Activated CD4-positive, alpha-beta memory T cell treated with anti-CD3 and anti-CD28 coated beads for 36 hours (primary cell): ENCODE measurements at regions of chr3 and their contacts with region 1.

Region 1: GRCh38 chr3:10758304-10759061 is 57.5 kb upstream of the SLC6A11 start:
- DNase-seq: peak; percentile 63
- H3K4me3 Mint-ChIP-seq: no peak overlapping the region
- H3K27ac Mint-ChIP-seq: no peak overlapping the region
- H3K4me1 Mint-ChIP-seq: peaks cover 6% of the 10 kb centered on the region
- H3K27me3 Mint-ChIP-seq: peaks cover 33% of the 10 kb centered on the region

Region 2: DNA sequence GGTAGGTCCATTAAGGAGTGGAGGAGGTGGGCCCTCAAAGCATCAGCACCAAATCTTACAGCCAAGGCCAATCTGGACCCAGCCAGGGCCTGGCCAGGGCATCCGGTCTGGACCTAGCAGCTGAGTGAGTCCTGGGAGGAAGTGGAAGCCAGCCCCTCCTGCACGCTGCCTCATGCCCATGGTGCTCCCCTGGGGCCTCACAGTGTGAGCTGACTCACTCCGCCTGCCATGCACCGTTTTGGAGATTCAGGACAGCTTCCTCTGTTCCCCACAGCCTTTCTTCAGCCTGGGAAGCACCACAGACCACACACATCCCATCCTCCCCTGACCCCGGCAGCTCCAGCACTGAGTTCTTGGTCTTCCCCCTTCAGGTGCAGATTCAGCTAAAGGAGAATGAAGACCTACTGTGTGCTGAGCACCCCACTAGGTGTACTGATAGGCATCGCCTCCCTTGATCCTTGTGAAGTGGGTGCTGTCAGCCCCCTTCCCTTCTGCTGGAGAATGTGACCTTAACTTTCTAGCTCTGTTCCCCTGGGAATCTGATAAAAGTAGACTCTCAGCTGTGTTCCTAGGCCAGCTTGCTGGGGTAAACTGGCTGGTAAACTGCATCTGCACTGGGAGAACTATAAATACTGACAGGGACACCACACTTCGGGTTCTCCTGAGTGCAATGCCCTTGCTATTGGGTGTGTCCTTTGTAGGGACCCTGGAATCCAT is 400.7 kb before region 1 on chr3:
- CTCF ChIA-PET with region 1: no interaction called
- POLR2A ChIA-PET with region 1: no interaction called
- intact Hi-C with region 1: no loop called
- DNase-seq: peak; percentile 29
- H3K4me3 Mint-ChIP-seq: no peak overlapping the region
- H3K27ac Mint-ChIP-seq: no peak overlapping the region
- H3K4me1 Mint-ChIP-seq: peaks cover 7% of the 10 kb centered on the region
- H3K27me3 Mint-ChIP-seq: peaks cover 23% of the 10 kb centered on the region

Region 3: DNA sequence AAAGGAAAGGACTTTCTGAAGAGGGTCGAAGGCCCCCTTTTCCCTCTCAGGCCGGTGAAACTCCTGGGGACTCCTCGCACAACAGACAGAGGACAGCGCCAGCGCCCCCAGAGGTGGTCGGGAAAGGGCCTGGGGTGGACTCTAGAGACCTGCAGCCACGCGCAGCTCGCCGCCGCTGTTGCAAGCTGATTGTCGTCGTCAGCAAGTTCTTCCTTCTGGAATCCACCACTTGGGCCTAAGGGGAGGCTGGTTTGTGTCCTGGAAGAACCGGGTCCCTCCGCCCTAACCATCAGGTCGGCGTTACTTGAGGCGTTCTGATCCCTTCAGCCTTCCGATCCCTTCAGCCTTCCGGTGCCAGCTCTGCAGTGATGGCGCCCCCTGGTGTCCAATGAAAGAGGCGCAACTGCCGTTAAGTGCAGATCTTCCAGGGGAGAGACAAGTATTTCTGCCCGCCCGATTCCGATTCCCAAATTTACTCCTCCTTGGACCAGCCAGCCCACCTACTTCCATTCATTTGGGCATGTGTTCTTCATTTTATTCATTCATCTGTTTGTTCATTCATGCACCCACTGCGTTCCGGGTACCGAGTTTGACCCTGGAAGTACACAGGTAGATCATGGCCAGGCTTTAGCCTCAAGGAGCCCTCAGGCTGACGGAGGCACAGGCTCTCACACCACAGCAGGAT is 19.7 kb before region 1 on chr3:
- CTCF ChIA-PET with region 1: interaction called, 27 read pairs
- POLR2A ChIA-PET with region 1: no interaction called
- intact Hi-C with region 1: no loop called
- DNase-seq: peak; percentile 80
- H3K4me3 Mint-ChIP-seq: no peak overlapping the region
- H3K27ac Mint-ChIP-seq: no peak overlapping the region
- H3K4me1 Mint-ChIP-seq: peaks cover 2% of the 10 kb centered on the region
- H3K27me3 Mint-ChIP-seq: peaks cover 35% of the 10 kb centered on the region

Region 4: DNA sequence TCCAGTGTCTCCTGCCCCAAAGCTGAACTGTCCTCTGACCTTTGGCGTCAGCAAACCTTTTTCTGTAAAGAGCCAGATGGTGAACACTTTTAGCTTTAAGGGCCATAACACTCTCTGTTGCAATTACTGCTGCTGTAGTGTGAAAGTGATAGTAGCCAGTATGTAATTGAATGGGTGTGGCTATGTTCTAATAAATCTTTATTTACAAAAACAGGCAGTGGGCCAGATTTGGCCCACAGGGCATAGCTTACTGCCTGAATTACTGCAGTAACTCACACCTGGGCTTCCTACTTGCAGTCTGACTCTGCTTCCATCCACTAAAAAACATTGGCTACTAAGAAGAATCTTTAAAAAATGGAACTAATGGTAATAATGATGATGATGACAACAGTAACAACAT is 10.4 kb before region 1 on chr3:
- CTCF ChIA-PET with region 1: interaction called, 11 read pairs
- POLR2A ChIA-PET with region 1: no interaction called
- intact Hi-C with region 1: no loop called
- DNase-seq: no peak
- H3K4me3 Mint-ChIP-seq: no peak overlapping the region
- H3K27ac Mint-ChIP-seq: no peak overlapping the region
- H3K4me1 Mint-ChIP-seq: no peaks in the 10 kb centered on the region
- H3K27me3 Mint-ChIP-seq: peaks cover 6% of the 10 kb centered on the region

Region 5: DNA sequence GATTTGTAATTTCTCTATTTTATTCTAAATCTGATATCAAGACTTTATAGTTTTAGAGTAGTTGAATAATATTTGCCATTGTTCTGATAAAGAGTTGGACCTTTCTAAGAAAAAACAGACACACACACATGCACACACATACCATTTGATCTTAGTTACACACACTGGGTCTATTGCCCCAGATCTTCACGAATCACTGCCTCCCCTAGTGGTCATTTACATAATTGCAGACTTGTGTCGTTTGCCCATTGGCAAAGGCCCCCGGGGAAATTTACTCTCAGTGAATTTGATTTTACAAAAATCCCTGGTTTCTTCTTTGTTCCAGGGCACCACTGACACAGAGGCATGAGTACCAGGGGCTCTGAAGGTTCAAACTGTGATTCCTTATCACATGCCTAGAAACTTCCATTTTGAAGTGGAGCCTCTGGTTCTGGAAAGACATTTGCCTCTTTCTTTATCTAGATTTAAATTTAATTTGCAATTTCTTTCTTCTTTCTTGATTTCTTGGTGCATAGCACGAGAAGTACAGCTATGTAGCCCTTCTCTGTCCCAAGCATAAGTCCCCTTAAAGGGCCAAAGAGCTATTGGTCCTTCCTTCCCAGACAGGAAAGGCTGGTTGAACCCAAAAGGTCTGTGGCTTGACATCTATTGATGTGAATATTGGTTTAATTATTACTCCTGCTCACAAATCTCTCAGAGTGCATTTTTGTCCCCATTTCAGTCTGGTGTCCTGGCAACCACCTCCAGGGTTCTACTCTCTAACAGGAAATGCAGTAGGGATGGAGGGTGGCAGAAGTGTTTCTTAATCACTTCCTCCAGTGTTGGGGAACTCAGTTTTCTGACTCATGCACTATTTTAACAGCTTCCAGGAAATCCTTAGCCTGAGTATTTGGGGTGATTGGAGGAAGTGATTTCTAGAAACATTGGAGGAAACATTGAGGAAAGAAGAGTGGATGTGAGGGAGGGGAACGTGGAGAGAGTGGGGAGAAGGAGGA is 25.2 kb after region 1 on chr3:
- CTCF ChIA-PET with region 1: interaction called, 11 read pairs
- POLR2A ChIA-PET with region 1: no interaction called
- intact Hi-C with region 1: no loop called
- DNase-seq: peak; percentile 31
- H3K4me3 Mint-ChIP-seq: no peak overlapping the region
- H3K27ac Mint-ChIP-seq: no peak overlapping the region
- H3K4me1 Mint-ChIP-seq: no peaks in the 10 kb centered on the region
- H3K27me3 Mint-ChIP-seq: peaks cover 30% of the 10 kb centered on the region

Region 6: DNA sequence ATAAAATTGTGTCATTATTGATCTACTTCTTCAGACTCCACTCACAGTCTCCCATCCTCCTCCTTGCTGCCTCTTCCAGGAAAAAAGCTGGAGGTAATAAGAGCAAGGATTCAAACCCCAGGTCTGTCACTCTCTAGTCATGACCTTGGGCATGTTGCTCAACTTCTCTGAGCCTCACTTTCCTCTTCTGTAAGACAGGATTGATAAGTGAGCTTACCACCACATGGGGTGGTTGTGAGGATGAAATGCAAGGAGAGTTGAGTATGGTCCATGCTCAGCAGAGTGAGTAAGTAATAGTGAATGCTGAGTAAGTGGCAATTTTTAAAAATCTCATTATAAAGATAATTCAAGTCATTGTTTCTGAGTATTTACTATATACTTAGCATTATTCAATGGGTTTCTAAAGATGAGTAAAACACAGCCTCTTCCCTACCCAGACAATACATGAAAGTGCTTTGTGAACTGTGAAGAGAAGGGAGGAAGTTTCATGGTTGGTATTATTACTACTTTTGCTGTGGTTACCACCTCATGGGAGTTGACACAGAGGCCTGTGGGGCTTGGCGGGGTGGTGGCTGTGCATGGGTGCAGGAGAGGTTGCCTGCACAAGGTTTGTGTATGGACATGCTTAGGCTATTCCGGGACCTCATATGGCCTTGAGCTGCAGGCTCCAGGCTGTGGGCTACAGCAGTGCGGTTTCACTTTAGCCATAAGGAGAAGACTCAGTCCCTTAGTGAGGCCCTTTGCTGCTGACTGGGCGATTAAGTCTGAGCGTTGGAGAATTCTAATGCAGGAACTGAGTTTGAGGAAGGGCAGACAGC is 87.6 kb after region 1 on chr3:
- CTCF ChIA-PET with region 1: no interaction called
- POLR2A ChIA-PET with region 1: no interaction called
- intact Hi-C with region 1: no loop called
- DNase-seq: no peak
- H3K4me3 Mint-ChIP-seq: no peak overlapping the region
- H3K27ac Mint-ChIP-seq: no peak overlapping the region
- H3K4me1 Mint-ChIP-seq: no peaks in the 10 kb centered on the region
- H3K27me3 Mint-ChIP-seq: peaks cover 26% of the 10 kb centered on the region

Region 7: GRCh38 chr3:10867384-10867783 is 108.9 kb after region 1 on chr3:
- CTCF ChIA-PET with region 1: no interaction called
- POLR2A ChIA-PET with region 1: no interaction called
- intact Hi-C with region 1: no loop called
- DNase-seq: no peak
- H3K4me3 Mint-ChIP-seq: no peak overlapping the region
- H3K27ac Mint-ChIP-seq: no peak overlapping the region
- H3K4me1 Mint-ChIP-seq: no peaks in the 10 kb centered on the region
- H3K27me3 Mint-ChIP-seq: peaks cover 2% of the 10 kb centered on the region

Region 8: GRCh38 chr3:10883478-10884234 is 125.2 kb after region 1 on chr3:
- CTCF ChIA-PET with region 1: interaction called, 15 read pairs
- POLR2A ChIA-PET with region 1: no interaction called
- intact Hi-C with region 1: no loop called
- DNase-seq: no peak
- H3K4me3 Mint-ChIP-seq: no peak overlapping the region
- H3K27ac Mint-ChIP-seq: no peak overlapping the region
- H3K4me1 Mint-ChIP-seq: no peaks in the 10 kb centered on the region
- H3K27me3 Mint-ChIP-seq: peaks cover 16% of the 10 kb centered on the region

Region 9: GRCh38 chr3:10945683-10946287 is 187.3 kb after region 1 on chr3:
- CTCF ChIA-PET with region 1: interaction called, 23 read pairs
- POLR2A ChIA-PET with region 1: no interaction called
- intact Hi-C with region 1: loop called (anchors 10 kb)
- DNase-seq: peak; percentile 65
- H3K4me3 Mint-ChIP-seq: no peak overlapping the region
- H3K27ac Mint-ChIP-seq: no peak overlapping the region
- H3K4me1 Mint-ChIP-seq: no peaks in the 10 kb centered on the region
- H3K27me3 Mint-ChIP-seq: peaks cover 12% of the 10 kb centered on the region

Region 10: DNA sequence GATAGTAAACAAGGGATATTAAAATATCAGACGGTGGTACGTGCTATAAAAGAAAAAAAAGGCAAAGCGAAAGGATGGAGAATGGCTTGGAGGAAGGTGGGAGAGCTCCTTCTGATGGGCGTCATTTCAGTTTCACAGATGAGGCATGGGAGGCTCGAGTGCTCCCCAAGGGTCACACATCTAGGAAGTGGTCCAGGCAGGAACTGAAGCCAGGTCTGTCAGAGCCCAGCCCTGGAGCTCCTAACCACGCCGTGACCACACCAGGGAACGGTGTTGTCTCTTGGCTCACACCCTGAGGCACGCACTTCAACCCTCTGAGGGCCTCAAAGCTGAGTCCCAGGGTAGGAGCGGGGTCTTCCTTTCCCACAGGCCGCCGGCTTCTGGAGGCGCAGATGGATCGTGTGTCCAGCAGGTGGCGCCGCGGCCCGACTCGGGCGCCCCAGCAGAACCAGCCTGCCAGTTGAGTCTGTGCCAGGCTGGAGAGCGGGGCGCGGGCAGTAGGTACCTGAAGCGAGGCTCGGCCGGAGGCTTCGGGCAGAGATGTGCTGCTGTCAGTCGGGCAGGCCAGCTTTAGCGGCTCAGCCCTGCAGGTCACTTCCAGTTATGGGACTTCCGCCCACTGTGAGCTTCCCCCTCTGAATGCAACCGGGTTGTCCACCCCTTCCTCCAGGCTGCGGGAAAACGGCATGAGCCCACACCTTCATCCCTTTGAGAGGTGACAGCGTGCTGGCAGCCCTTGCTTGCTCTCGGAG is 302.2 kb after region 1 on chr3:
- CTCF ChIA-PET with region 1: interaction called, 22 read pairs
- POLR2A ChIA-PET with region 1: no interaction called
- intact Hi-C with region 1: loop called (anchors 1 kb)
- DNase-seq: peak; percentile 61
- H3K4me3 Mint-ChIP-seq: no peak overlapping the region
- H3K27ac Mint-ChIP-seq: no peak overlapping the region
- H3K4me1 Mint-ChIP-seq: no peaks in the 10 kb centered on the region
- H3K27me3 Mint-ChIP-seq: peaks cover 6% of the 10 kb centered on the region